ENCODE measurements at regions of chr10 and their contacts with region 1.

Region 1: GRCh38 chr10:110497438-110498086 is at the start of gene DUSP5:
- DNase-seq: peak; percentile 97
- ATAC-seq: peak; percentile 68
- H3K4me3 Mint-ChIP-seq: peak within 1 kb of the TSS; percentile 95
- H3K27ac Mint-ChIP-seq: peak within 1 kb of the TSS; percentile 92
- H3K4me1 Mint-ChIP-seq: peaks cover 46% of the 10 kb centered on the region
- H3K27me3 Mint-ChIP-seq: no peaks in the 10 kb centered on the region
- total RNA-seq, gene DUSP5: 60.9 to 70.7 TPM

Region 2: GRCh38 chr10:109922976-109923921 is 574.3 kb before region 1 on chr10 and contains the start of gene XPNPEP1:
- CTCF ChIA-PET with region 1: no interaction called
- POLR2A ChIA-PET with region 1: no interaction called
- intact Hi-C with region 1: loop called in 1 of 2 experiments (anchors 5 kb)
- DNase-seq: peak; percentile 90
- ATAC-seq: peak; percentile 90
- H3K4me3 Mint-ChIP-seq: peak within 1 kb of the TSS; percentile 94
- H3K27ac Mint-ChIP-seq: peak within 1 kb of the TSS; percentile 94
- H3K4me1 Mint-ChIP-seq: peaks cover 48% of the 10 kb centered on the region
- H3K27me3 Mint-ChIP-seq: no peaks in the 10 kb centered on the region
- total RNA-seq, gene XPNPEP1: 85.4 to 91.2 TPM

Region 3: GRCh38 chr10:110225756-110226542 is 271.6 kb before region 1 on chr10:
- CTCF ChIA-PET with region 1: no interaction called
- POLR2A ChIA-PET with region 1: interaction called, 3 read pairs
- intact Hi-C with region 1: loop called in 1 of 2 experiments (anchors 1 kb)
- DNase-seq: peak; percentile 94
- ATAC-seq: peak; percentile 48
- H3K4me3 Mint-ChIP-seq: peak overlapping the region; percentile 95
- H3K27ac Mint-ChIP-seq: peak overlapping the region; percentile 95
- H3K4me1 Mint-ChIP-seq: peaks cover 44% of the 10 kb centered on the region
- H3K27me3 Mint-ChIP-seq: no peaks in the 10 kb centered on the region

Region 4: GRCh38 chr10:110354322-110354766 is 143.2 kb before region 1 on chr10:
- CTCF ChIA-PET with region 1: interaction called, 28 read pairs
- POLR2A ChIA-PET with region 1: interaction called, 23 read pairs
- intact Hi-C with region 1: loop called (anchors 1 kb)
- DNase-seq: peak; percentile 94
- ATAC-seq: peak; percentile 39
- H3K4me3 Mint-ChIP-seq: peak overlapping the region; percentile 68
- H3K27ac Mint-ChIP-seq: peak overlapping the region; percentile 98
- H3K4me1 Mint-ChIP-seq: peaks cover 67% of the 10 kb centered on the region
- H3K27me3 Mint-ChIP-seq: no peaks in the 10 kb centered on the region

Region 5: GRCh38 chr10:110425684-110426293 is 71.8 kb before region 1 on chr10:
- CTCF ChIA-PET with region 1: interaction called, 4 read pairs
- POLR2A ChIA-PET with region 1: no interaction called
- intact Hi-C with region 1: loop called (anchors 2 kb)
- DNase-seq: peak; percentile 81
- ATAC-seq: peak; percentile 90
- H3K4me3 Mint-ChIP-seq: no peak overlapping the region
- H3K27ac Mint-ChIP-seq: peak overlapping the region; percentile 79
- H3K4me1 Mint-ChIP-seq: peaks cover 40% of the 10 kb centered on the region
- H3K27me3 Mint-ChIP-seq: no peaks in the 10 kb centered on the region

Region 6: GRCh38 chr10:110547139-110547761 is 49.7 kb after region 1 on chr10:
- CTCF ChIA-PET with region 1: interaction called, 20 read pairs
- POLR2A ChIA-PET with region 1: interaction called, 6 read pairs
- intact Hi-C with region 1: loop called (anchors 1 to 2 kb)
- DNase-seq: no peak
- ATAC-seq: peak; percentile 84
- H3K4me3 Mint-ChIP-seq: no peak overlapping the region
- H3K27ac Mint-ChIP-seq: peak overlapping the region; percentile 56
- H3K4me1 Mint-ChIP-seq: peaks cover 8% of the 10 kb centered on the region
- H3K27me3 Mint-ChIP-seq: peaks cover 6% of the 10 kb centered on the region

Region 7: DNA sequence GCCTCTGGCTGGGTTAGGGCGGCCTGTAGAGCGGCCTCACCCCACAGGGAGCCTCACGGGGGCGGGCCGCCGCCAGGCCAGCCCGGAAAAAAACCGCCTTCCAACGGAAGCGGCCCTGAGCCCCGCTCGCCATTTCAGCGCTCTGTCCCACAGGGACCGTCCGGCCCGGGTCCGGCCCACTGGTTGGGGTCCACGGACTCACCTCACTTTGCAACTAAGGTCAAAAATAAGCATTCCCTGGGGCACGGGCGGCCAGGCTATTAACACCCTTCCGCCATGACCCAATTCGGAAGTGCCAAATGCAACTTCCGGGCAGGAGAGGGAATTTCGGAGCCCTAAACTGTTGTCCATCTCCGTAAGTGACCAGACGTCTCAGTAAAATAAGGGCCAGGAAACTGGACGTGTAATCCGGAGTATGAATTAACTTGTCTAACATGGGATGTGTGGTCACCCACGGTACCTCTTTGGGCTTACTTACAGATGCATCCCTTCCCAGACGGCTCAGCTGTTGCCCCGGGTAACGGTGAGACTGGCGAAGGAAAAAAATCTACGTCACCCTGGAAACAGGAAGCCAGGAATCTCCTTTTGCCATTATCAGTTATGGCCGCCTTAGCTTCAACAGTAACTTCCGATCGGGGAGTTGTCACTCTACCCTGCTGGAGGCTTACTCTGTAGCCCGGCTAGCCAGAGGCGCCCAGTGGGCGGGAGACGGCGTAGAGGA is 421.2 kb after region 1 on chr10 and contains the start of gene BBIP1:
- CTCF ChIA-PET with region 1: no interaction called
- POLR2A ChIA-PET with region 1: no interaction called
- intact Hi-C with region 1: loop called in 1 of 2 experiments (anchors 5 kb)
- DNase-seq: no peak
- ATAC-seq: peak; percentile 93
- H3K4me3 Mint-ChIP-seq: peak within 1 kb of the TSS; percentile 96
- H3K27ac Mint-ChIP-seq: peak within 1 kb of the TSS; percentile 98
- H3K4me1 Mint-ChIP-seq: peaks cover 41% of the 10 kb centered on the region
- H3K27me3 Mint-ChIP-seq: no peaks in the 10 kb centered on the region
- total RNA-seq, gene BBIP1: 34.3 to 48.8 TPM

Measured in activated CD4-positive, alpha-beta T cell treated with anti-CD3 and anti-CD28 coated beads for 36 hours (primary cell).